CD4-positive, alpha-beta memory T cell (primary cell): ENCODE measurements at regions of chr7 and their contacts with region 1.

Region 1: DNA sequence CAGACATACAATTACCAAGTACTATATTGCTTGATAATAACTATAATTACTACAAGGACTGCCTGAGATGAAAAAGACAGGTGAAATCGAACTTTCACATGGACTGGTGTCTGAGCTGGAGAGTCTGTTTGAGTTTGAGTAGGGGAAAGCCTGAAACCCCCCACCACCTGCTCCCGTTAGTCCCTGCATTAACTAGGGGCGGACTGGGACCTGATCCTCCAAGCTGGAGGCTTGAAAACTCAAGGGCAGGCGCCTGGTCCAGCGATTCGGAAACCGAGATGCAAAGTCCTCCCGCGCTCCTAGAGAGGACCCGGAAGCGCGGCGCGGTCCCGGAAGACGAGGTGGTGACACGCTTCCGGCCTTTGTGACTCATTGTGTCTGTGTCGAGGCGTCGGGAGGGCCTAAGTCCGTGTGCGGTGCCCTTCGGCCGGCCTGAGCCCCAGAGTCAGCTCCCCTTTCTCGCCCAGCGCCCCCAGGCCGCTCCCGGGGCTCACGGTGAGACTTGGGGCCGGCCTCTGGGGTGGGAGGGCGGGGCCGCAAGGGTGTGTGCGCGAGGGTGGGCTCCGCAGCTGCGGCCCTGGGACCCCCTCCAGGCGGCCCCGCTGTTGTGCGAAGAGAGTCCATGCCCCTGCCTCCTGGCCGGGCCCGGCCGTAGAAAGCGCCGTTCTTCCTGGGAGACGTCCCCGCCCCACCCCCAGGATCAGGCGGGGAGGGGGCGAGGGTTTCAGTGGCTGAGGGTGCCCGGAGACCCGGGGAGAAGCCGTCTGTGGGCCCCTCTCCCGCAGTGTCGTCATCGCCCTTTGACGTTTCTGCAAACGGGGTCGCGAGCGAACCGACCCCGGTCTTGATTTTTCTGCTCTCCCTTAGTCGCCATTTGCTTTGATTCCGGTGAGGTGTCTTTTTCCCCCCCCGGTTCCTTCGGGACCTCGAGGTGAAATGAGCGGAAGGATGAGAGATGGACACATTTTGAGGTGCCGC is at the start of gene ZKSCAN1:
- DNase-seq: peak; percentile 81 to 87 (median 85)
- H3K4me3 ChIP-seq: peak within 1 kb of the TSS; percentile 92
- H3K4me3 Mint-ChIP-seq: peak within 1 kb of the TSS; percentile 87 to 97 (median 96)
- H3K27ac ChIP-seq: peak within 1 kb of the TSS; percentile 96
- H3K27ac Mint-ChIP-seq: peak within 1 kb of the TSS; percentile 95 to 99 (median 98)
- H3K4me1 ChIP-seq: peaks cover 43% of the 10 kb centered on the region
- H3K4me1 Mint-ChIP-seq: peaks cover 28 to 53% (median 42%) of the 10 kb centered on the region in 4 donors
- H3K27me3 ChIP-seq: no peaks in the 10 kb centered on the region
- H3K27me3 Mint-ChIP-seq: no peaks in the 10 kb centered on the region
- total RNA-seq, gene ZKSCAN1: 94.8 to 101 TPM

Region 2: DNA sequence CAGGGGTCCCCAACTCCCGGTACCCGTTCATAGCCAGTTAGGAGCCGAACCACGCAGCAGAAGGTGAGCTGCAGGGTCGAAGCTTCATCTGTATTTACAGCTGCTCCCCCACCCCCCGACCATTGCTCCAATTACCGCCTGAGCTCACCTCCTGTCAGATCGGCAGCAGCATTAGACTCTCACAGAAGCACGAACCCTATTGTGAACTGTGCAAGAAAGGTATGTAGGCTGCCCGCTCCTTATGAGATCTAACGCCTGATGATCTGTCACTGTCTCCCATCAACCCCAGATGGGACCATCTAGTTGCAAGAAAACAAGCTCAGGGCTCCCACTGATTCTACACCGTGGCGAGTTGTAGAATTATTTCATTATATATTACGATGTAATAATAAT is 25.1 kb before region 1 on chr7:
- CTCF ChIA-PET with region 1: interaction called, 12 read pairs
- POLR2A ChIA-PET with region 1: interaction called, 38 read pairs
- intact Hi-C with region 1: no loop called
- DNase-seq: peak in 1 of 5 donors; percentile 2
- H3K4me3 ChIP-seq: no peak overlapping the region
- H3K4me3 Mint-ChIP-seq: no peak overlapping the region
- H3K27ac ChIP-seq: no peak overlapping the region
- H3K27ac Mint-ChIP-seq: no peak overlapping the region
- H3K4me1 ChIP-seq: peaks cover 3% of the 10 kb centered on the region
- H3K4me1 Mint-ChIP-seq: peaks cover 0 to 6% (median 4%) of the 10 kb centered on the region in 4 donors
- H3K27me3 ChIP-seq: no peaks in the 10 kb centered on the region
- H3K27me3 Mint-ChIP-seq: peaks cover 2 to 5% of the 10 kb centered on the region in 2 donors

Region 3: GRCh38 chr7:99997545-99998137 is 17.9 kb before region 1 on chr7:
- CTCF ChIA-PET with region 1: interaction called, 4 read pairs
- POLR2A ChIA-PET with region 1: interaction called, 38 read pairs
- intact Hi-C with region 1: loop called (anchors 1 kb)
- DNase-seq: peak; percentile 72 to 78 (median 76)
- H3K4me3 ChIP-seq: peak overlapping the region in 1 of 2 donors; percentile 43
- H3K4me3 Mint-ChIP-seq: peak overlapping the region; percentile 58 to 80 (median 75)
- H3K27ac ChIP-seq: peak overlapping the region; percentile 3
- H3K27ac Mint-ChIP-seq: peak overlapping the region; percentile 69 to 95 (median 90)
- H3K4me1 ChIP-seq: peaks cover 18% of the 10 kb centered on the region
- H3K4me1 Mint-ChIP-seq: peaks cover 8 to 15% (median 12%) of the 10 kb centered on the region in 4 donors
- H3K27me3 ChIP-seq: no peaks in the 10 kb centered on the region
- H3K27me3 Mint-ChIP-seq: no peaks in the 10 kb centered on the region

Region 4: DNA sequence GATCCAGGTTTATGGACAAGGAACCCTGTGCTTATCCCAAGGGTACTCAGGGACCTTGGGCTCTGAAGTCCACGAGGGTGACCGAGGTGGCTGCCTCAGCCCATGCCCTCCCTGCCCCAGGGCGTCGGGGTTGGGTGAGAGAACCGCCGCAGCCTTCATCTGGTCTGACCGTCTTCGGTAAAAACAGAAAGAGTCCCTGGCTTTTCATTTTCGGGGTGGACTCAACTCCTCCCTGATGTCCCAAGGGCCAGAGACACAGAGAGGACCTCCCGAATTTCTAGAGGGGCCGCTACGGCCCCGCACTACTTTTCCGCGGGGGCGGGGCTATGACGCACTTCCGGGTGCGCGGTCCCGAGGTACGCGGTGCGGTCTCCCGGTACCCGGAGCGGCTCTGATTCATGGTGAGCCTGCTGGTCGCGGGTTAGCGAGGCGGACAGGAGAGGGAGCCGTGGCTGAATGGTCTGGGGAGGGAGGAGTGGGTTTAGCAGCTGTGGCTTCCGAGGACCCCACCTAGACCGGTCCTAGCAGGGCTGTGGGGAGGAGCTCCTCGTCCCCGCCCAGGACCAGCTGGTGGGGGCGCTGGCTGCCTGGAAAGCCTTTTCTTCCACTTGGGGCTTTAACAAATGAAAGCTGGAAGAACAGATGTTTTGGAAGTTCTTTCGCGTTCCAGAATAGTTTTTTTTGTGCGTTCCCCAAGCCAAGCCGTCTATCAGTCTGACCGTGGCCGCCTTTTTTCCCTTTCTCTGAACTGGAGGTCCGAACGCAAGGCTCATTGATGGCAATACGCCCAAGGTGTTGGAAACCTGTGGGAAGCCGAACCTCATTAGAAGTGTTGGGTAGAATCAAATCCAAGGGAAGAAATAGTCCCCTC is 34.2 kb after region 1 on chr7 and contains the start of gene ZSCAN21:
- CTCF ChIA-PET with region 1: interaction called, 4 read pairs
- POLR2A ChIA-PET with region 1: interaction called, 21 read pairs
- intact Hi-C with region 1: no loop called
- DNase-seq: peak; percentile 76 to 82 (median 77)
- H3K4me3 ChIP-seq: peak within 1 kb of the TSS; percentile 67 to 94
- H3K4me3 Mint-ChIP-seq: peak within 1 kb of the TSS; percentile 91 to 97 (median 94)
- H3K27ac ChIP-seq: peak within 1 kb of the TSS; percentile 83
- H3K27ac Mint-ChIP-seq: peak within 1 kb of the TSS; percentile 91 to 98 (median 97)
- H3K4me1 ChIP-seq: peaks cover 13% of the 10 kb centered on the region
- H3K4me1 Mint-ChIP-seq: peaks cover 11 to 28% (median 18%) of the 10 kb centered on the region in 4 donors
- H3K27me3 ChIP-seq: no peaks in the 10 kb centered on the region
- H3K27me3 Mint-ChIP-seq: no peaks in the 10 kb centered on the region
- total RNA-seq, gene ZSCAN21: 9.9 to 10.6 TPM